SK-N-SH (cell line): ENCODE measurements at regions of chr2 and their contacts with region 1.

Region 1: DNA sequence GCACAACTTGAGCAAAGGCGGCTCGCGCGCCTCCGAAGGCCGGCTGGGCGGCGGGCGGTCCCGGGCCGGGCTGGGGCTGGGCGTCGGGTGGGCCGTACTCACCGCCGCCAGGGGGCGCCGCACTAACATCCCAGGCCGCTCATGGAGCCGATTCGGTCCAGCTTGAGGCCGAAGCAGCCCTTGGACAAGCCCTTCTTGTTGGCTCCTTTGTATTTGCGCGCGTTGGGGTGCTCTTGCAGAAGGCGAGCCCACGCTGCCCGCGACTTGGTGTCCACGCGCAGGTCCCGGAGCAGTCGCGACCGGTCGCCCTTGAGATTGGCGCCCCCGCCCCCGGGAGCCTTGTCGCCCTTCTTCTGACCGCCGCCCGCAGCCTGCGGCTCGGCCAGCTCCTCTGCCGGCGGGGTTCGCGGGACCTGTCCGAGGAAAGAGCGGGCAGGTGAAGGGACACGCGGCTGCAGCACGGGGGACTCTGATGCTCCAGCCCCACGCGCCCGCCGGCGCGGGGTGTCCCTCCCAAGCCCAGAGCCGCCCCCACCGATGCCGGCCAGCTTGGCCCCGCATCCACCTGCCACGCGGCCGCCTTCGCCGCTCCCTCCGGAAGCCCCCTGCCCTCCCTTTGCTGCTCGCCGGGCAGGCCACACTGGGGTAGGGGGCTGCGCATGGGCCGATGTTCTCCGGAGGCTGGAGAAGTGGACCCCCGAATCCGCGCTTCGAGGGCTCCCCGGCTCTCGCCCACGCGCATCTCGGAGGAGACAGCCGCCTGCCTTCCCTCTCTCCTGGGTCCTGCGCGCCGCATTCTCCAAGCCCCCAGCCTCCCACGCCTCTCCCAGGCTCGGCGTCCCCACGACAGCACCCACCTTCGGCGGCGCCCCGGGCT is 655 bp downstream of the NPPC start:
- DNase-seq: peak; percentile 96
- H3K4me3 ChIP-seq: peak overlapping the region; percentile 45 to 62
- H3K27ac ChIP-seq: no peak overlapping the region
- H3K4me1 ChIP-seq: peaks cover 0 to 20% of the 10 kb centered on the region in 2 experiments; a peak in 1 of 4 replicates
- H3K27me3 ChIP-seq: peaks cover 41% of the 10 kb centered on the region
- CTCF ChIP-seq: peak; percentile 79
- EP300 ChIP-seq: no peak
- RAD21 ChIP-seq: peak; percentile 73

Region 2: GRCh38 chr2:231489990-231490389 is 435.6 kb before region 1 on chr2:
- CTCF ChIA-PET with region 1: no interaction called
- POLR2A ChIA-PET with region 1: no interaction called
- DNase-seq: no peak
- H3K4me3 ChIP-seq: no peak overlapping the region
- H3K27ac ChIP-seq: no peak overlapping the region
- H3K4me1 ChIP-seq: no peaks in the 10 kb centered on the region
- H3K27me3 ChIP-seq: no peaks in the 10 kb centered on the region
- CTCF ChIP-seq: peak; percentile 27; the same call in 1 of the 2 replicates
- EP300 ChIP-seq: no peak
- RAD21 ChIP-seq: no peak

Region 3: DNA sequence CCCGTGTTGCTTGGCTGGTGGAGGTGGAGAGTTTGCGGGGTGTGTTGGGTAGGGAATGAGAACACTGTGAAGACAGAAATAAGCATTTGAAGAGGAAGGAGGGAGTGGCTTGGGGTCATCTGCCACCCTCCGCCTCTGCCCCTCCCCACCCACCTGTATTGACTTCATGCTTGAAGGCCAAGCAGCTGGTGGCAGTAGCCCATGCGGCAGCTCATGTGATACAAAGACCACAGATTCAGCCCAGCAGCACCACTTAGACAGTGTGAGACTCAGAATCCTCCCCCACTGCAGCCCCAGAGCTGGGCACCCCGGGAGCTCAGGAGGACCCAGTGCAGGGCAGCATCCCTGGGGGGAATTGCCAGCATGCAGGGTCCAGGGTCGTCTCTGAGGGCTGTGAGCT is 14.8 kb before region 1 on chr2:
- CTCF ChIA-PET with region 1: interaction called, 82 read pairs
- POLR2A ChIA-PET with region 1: no interaction called
- DNase-seq: no peak
- H3K4me3 ChIP-seq: no peak overlapping the region
- H3K27ac ChIP-seq: no peak overlapping the region
- H3K4me1 ChIP-seq: no peaks in the 10 kb centered on the region
- H3K27me3 ChIP-seq: 0 out of 2 replicates have a peak, but pooled peaks cover 4% of the 10 kb centered on the region
- CTCF ChIP-seq: no peak
- EP300 ChIP-seq: no peak
- RAD21 ChIP-seq: no peak

Region 4: GRCh38 chr2:232142049-232142448 is 216.5 kb after region 1 on chr2:
- CTCF ChIA-PET with region 1: interaction called, 117 read pairs
- POLR2A ChIA-PET with region 1: no interaction called
- DNase-seq: peak; percentile 48
- H3K4me3 ChIP-seq: no peak overlapping the region; a peak in 1 of 4 replicates
- H3K27ac ChIP-seq: no peak overlapping the region
- H3K4me1 ChIP-seq: peaks cover 0 to 13% of the 10 kb centered on the region in 2 experiments; a peak in 1 of 4 replicates
- H3K27me3 ChIP-seq: no peaks in the 10 kb centered on the region
- CTCF ChIP-seq: peak; percentile 79
- EP300 ChIP-seq: no peak
- RAD21 ChIP-seq: peak; percentile 80

Region 5: GRCh38 chr2:232310121-232310520 is 384.6 kb after region 1 on chr2:
- CTCF ChIA-PET with region 1: interaction called, 11 read pairs
- POLR2A ChIA-PET with region 1: no interaction called
- DNase-seq: no peak
- H3K4me3 ChIP-seq: no peak overlapping the region
- H3K27ac ChIP-seq: no peak overlapping the region
- H3K4me1 ChIP-seq: no peaks in the 10 kb centered on the region; a peak in 1 of 4 replicates
- H3K27me3 ChIP-seq: no peaks in the 10 kb centered on the region
- CTCF ChIP-seq: no peak
- EP300 ChIP-seq: no peak
- RAD21 ChIP-seq: no peak

Region 6: GRCh38 chr2:232333361-232334270 is 408.1 kb after region 1 on chr2:
- CTCF ChIA-PET with region 1: interaction called, 214 read pairs
- POLR2A ChIA-PET with region 1: no interaction called
- DNase-seq: peak; percentile 69
- H3K4me3 ChIP-seq: no peak overlapping the region; a peak in 1 of 4 replicates
- H3K27ac ChIP-seq: no peak overlapping the region; a peak in 1 of 4 replicates
- H3K4me1 ChIP-seq: no peaks in the 10 kb centered on the region; a peak in 1 of 4 replicates
- H3K27me3 ChIP-seq: no peaks in the 10 kb centered on the region
- CTCF ChIP-seq: peak; percentile 58
- EP300 ChIP-seq: no peak
- RAD21 ChIP-seq: no peak

Region 7: DNA sequence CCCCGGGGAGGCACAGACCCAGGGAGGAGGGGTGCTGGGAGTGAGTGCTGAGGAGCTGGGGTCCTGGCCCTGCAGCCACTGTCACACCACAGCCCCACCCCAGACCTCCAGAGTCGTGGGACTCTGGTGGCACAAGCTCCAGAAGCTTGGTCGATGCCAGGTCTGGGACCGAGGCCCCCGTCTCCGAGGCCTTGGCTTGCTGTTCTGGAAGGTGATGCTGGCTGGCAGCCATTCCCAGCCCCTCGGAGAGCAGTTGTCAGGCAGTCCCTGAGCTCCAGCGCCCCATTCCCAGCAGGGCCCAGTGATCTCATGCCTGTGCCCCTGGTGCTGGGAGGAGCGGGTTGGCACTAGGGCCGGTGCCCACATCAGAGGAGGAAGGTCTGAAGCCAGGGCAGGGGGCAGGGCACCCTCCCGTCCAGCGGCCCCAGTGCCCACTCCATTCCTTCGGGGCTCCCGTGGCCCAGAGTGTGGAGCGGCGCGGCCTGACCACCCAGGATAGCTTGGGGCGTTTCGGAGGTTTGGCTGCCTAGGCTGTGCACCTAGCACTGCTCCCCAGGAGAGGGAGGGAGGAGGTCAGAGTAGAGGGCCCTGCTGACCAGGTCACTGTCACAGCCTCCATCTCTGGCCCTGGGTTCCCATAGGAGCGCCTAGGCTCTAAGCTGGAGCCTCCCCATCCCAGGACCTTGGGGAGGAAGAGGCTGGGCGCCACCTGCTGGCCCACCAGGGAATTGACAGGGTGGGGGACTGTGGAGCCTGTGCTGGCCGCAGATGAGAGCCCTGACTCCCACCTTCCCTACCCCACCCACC is 513.6 kb after region 1 on chr2:
- CTCF ChIA-PET with region 1: interaction called, 11 read pairs
- POLR2A ChIA-PET with region 1: no interaction called
- DNase-seq: peak; percentile 70
- H3K4me3 ChIP-seq: no peak overlapping the region
- H3K27ac ChIP-seq: no peak overlapping the region
- H3K4me1 ChIP-seq: no peaks in the 10 kb centered on the region; a peak in 1 of 4 replicates
- H3K27me3 ChIP-seq: no peaks in the 10 kb centered on the region
- CTCF ChIP-seq: peak; percentile 67
- EP300 ChIP-seq: no peak
- RAD21 ChIP-seq: peak; percentile 29